ENCODE measurements at regions of chr18 and their contacts with region 1.

Region 1: DNA sequence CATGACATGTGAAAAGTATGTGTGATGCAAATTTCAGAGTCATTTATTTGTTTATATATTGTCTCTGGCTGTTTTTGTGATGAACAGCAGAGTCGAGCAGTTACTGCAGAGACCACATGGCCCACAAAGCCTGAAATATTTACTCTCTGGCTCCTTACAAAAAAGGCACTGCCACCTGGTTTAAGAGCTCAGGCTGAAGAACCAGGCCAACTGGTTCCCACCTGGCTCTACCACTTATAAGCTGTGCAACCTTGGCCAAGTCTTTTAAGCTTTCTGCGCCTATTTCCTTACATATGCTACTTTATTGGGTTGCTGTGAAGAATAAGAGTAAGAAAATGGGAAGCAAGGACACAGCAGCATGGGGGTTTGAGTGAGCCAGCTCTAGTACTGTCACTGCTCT is 207.6 kb downstream of the L3MBTL4 start:
- DNase-seq: no peak
- H3K4me3 ChIP-seq: no peak overlapping the region
- H3K27ac ChIP-seq: no peak overlapping the region
- H3K27me3 ChIP-seq: no peaks in the 10 kb centered on the region
- CTCF ChIP-seq: no peak

Region 2: DNA sequence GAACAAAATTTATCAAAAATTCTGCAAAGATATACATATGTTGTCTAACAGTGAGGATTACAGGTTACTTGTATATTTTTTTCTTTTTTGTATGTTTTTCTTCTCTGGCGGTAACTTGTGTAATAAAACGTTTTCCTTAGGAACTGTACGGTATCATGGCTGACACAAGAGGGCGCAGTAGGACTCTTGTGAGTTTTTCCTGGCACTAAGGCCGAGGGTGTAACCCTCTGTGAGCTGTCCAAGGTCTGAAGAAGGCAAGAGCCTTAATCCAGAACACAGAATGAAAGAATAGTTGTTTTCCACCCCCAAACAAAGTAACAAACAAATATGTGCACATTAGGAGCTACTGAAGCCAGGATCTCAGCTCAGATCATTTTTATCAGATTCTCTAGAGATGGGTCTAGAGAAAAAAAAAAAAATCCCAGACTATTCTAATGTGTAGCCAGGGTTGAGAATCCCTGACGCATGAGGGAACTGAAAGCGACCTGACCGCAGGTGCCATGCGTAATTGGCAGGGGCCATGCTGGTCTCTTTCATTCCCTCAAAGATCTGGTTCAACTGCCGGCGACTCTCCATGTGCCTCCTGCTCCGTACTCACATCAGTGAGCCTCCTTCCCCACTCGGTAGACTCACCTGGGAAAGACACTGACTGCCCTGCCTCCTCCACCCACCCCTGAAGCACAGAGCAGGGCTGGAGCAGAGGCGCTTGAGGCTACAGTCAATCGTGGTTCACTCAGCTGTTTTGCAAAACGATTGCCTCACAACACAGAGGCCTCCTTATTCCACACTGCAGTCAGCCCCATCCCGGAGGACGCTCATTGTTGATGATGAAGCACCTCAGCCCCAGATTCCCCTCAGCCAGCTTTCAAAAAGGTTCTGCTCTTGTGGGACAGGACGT is 338.6 kb before region 1 on chr18:
- CTCF ChIA-PET with region 1: interaction called, 10 read pairs
- POLR2A ChIA-PET with region 1: no interaction called
- DNase-seq: peak; percentile 75
- H3K4me3 ChIP-seq: no peak overlapping the region
- H3K27ac ChIP-seq: no peak overlapping the region
- H3K27me3 ChIP-seq: peaks cover 6% of the 10 kb centered on the region
- CTCF ChIP-seq: peak; percentile 87

Region 3: GRCh38 chr18:5879479-5879882 is 327.6 kb before region 1 on chr18:
- CTCF ChIA-PET with region 1: interaction called, 12 read pairs
- POLR2A ChIA-PET with region 1: no interaction called
- DNase-seq: peak; percentile 11
- H3K4me3 ChIP-seq: no peak overlapping the region
- H3K27ac ChIP-seq: no peak overlapping the region
- H3K27me3 ChIP-seq: no peaks in the 10 kb centered on the region
- CTCF ChIP-seq: peak; percentile 84

Region 4: GRCh38 chr18:6132751-6133368 is 74.3 kb before region 1 on chr18:
- CTCF ChIA-PET with region 1: no interaction called
- POLR2A ChIA-PET with region 1: no interaction called
- DNase-seq: no peak
- H3K4me3 ChIP-seq: no peak overlapping the region
- H3K27ac ChIP-seq: no peak overlapping the region
- H3K27me3 ChIP-seq: no peaks in the 10 kb centered on the region
- CTCF ChIP-seq: no peak

Region 5: DNA sequence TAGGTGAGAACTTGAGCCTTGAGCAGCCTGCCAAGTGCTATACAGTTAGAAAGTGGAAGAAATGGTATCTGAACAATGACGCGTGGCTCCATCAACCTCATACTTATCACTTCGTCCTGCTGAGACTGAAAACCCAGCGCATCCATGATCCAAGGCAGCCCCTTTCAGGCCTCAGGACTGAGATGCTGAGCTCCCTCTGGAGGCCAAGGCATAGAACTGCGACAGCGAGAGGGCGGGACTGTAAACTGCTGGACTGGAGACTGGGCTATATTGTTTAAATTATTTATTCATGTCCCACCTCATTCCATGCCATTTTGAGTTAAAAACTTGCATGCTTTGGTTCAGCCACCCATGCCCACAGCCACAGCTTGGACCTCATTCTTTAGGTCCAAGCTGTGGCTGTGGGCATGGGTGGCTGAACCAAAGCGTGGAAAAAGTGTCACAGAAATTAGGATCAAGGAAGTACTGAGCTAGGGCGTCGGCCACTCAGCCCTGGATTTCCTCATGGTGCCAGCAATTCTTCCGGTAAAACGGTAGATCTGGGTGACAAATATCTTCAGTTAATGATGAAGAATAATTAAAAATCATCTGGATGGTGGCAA is 12.1 kb after region 1 on chr18:
- CTCF ChIA-PET with region 1: interaction called, 27 read pairs
- POLR2A ChIA-PET with region 1: no interaction called
- DNase-seq: peak; percentile 43
- H3K4me3 ChIP-seq: no peak overlapping the region
- H3K27ac ChIP-seq: no peak overlapping the region
- H3K27me3 ChIP-seq: no peaks in the 10 kb centered on the region
- CTCF ChIP-seq: peak; percentile 98